Activated CD4-positive, alpha-beta T cell treated with anti-CD3 and anti-CD28 coated beads, Interleukin-2, amount 10 ng/mL, durations not matched to agents 7 days and 5 days (primary cell): ENCODE measurements at regions of chr12 and their contacts with region 1.

Region 1: DNA sequence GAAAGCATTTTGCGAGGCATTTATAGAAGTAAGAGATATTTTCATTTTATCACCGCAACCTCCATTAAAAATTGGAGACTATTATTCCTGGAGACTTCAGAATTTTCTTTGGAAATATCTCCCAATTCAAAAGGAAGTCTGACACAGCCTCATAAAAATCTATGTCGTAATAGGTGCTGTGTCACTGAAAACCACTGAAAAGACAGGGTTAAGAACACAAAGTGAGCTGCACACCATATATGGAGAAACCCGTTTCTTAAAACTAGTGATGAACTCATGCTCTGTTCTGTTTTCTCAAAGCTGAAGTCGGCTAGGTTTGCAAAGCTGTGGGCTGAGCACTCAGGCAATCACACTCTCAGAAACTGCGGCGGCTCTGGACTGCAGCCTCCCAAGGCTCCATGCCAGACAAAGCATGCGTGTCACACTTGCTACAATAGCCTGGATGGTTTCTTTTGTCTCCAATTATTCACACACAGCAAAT is at the start of gene GLIPR1:
- DNase-seq: peak; percentile 81
- H3K4me3 Mint-ChIP-seq: peak within 1 kb of the TSS; percentile 91
- H3K27ac Mint-ChIP-seq: peak within 1 kb of the TSS; percentile 97
- H3K4me1 Mint-ChIP-seq: peaks cover 78% of the 10 kb centered on the region
- H3K27me3 Mint-ChIP-seq: no peaks in the 10 kb centered on the region
- total RNA-seq, gene GLIPR1: 35.2 to 43.6 TPM

Region 2: GRCh38 chr12:75225546-75225945 is 255.0 kb before region 1 on chr12:
- CTCF ChIA-PET with region 1: no interaction called
- POLR2A ChIA-PET with region 1: no interaction called
- DNase-seq: no peak
- H3K4me3 Mint-ChIP-seq: no peak overlapping the region
- H3K27ac Mint-ChIP-seq: no peak overlapping the region
- H3K4me1 Mint-ChIP-seq: no peaks in the 10 kb centered on the region
- H3K27me3 Mint-ChIP-seq: no peaks in the 10 kb centered on the region

Region 3: GRCh38 chr12:75390899-75391538 is 89.5 kb before region 1 on chr12 and contains the start of gene GLIPR1L2:
- CTCF ChIA-PET with region 1: interaction called, 18 read pairs
- POLR2A ChIA-PET with region 1: interaction called, 9 read pairs
- DNase-seq: peak; percentile 87
- H3K4me3 Mint-ChIP-seq: peak within 1 kb of the TSS; percentile 86
- H3K27ac Mint-ChIP-seq: peak within 1 kb of the TSS; percentile 94
- H3K4me1 Mint-ChIP-seq: peaks cover 43% of the 10 kb centered on the region
- H3K27me3 Mint-ChIP-seq: no peaks in the 10 kb centered on the region
- total RNA-seq, gene GLIPR1L2: 0.30 to 0.75 TPM

Region 4: GRCh38 chr12:75505706-75506312 is 25.3 kb after region 1 on chr12:
- CTCF ChIA-PET with region 1: interaction called, 10 read pairs
- POLR2A ChIA-PET with region 1: no interaction called
- DNase-seq: no peak
- H3K4me3 Mint-ChIP-seq: no peak overlapping the region
- H3K27ac Mint-ChIP-seq: peak overlapping the region; percentile 15
- H3K4me1 Mint-ChIP-seq: peaks cover 32% of the 10 kb centered on the region
- H3K27me3 Mint-ChIP-seq: no peaks in the 10 kb centered on the region

Region 5: GRCh38 chr12:75585330-75585729 is 104.8 kb after region 1 on chr12:
- CTCF ChIA-PET with region 1: no interaction called
- POLR2A ChIA-PET with region 1: no interaction called
- DNase-seq: no peak
- H3K4me3 Mint-ChIP-seq: no peak overlapping the region
- H3K27ac Mint-ChIP-seq: no peak overlapping the region
- H3K4me1 Mint-ChIP-seq: no peaks in the 10 kb centered on the region
- H3K27me3 Mint-ChIP-seq: peaks cover 8% of the 10 kb centered on the region

Region 6: GRCh38 chr12:76037130-76038103 is 556.9 kb after region 1 on chr12:
- CTCF ChIA-PET with region 1: interaction called, 11 read pairs
- POLR2A ChIA-PET with region 1: no interaction called
- DNase-seq: peak; percentile 50
- H3K4me3 Mint-ChIP-seq: no peak overlapping the region
- H3K27ac Mint-ChIP-seq: no peak overlapping the region
- H3K4me1 Mint-ChIP-seq: peaks cover 19% of the 10 kb centered on the region
- H3K27me3 Mint-ChIP-seq: peaks cover 5% of the 10 kb centered on the region